Left ventricle myocardium inferior (tissue), 1 donor: ENCODE measurements at regions of chr2 and their contacts with region 1.

Region 1: GRCh38 chr2:222561817-222562645 is 93.9 kb downstream of the FARSB start:
- DNase-seq: no peak
- H3K4me3 ChIP-seq: no peak overlapping the region
- H3K27ac ChIP-seq: no peak overlapping the region
- H3K4me1 ChIP-seq: peaks cover 13% of the 10 kb centered on the region
- H3K27me3 ChIP-seq: no peaks in the 10 kb centered on the region
- CTCF ChIP-seq: peak; percentile 77

Region 2: GRCh38 chr2:222318026-222318711 is 243.9 kb before region 1 on chr2:
- intact Hi-C with region 1: loop called (anchors 5 kb)
- DNase-seq: peak; percentile 53
- H3K4me3 ChIP-seq: peak overlapping the region; percentile 76
- H3K27ac ChIP-seq: peak overlapping the region; percentile 82
- H3K4me1 ChIP-seq: peaks cover 30% of the 10 kb centered on the region
- H3K27me3 ChIP-seq: peaks cover 92% of the 10 kb centered on the region
- CTCF ChIP-seq: peak; percentile 60